ENCODE measurements at regions of chr6 and their contacts with region 1.

Region 1: GRCh38 chr6:31158140-31158862 is at the start of gene TCF19:
- DNase-seq: peak; percentile 99
- H3K4me3 Mint-ChIP-seq: peak within 1 kb of the TSS; percentile 82
- H3K27ac Mint-ChIP-seq: peak within 1 kb of the TSS; percentile 75
- H3K4me1 Mint-ChIP-seq: peaks cover 29% of the 10 kb centered on the region
- H3K27me3 Mint-ChIP-seq: no peaks in the 10 kb centered on the region
- total RNA-seq, gene TCF19: 75.9 and 78.4 TPM in 2 replicates

Region 2: DNA sequence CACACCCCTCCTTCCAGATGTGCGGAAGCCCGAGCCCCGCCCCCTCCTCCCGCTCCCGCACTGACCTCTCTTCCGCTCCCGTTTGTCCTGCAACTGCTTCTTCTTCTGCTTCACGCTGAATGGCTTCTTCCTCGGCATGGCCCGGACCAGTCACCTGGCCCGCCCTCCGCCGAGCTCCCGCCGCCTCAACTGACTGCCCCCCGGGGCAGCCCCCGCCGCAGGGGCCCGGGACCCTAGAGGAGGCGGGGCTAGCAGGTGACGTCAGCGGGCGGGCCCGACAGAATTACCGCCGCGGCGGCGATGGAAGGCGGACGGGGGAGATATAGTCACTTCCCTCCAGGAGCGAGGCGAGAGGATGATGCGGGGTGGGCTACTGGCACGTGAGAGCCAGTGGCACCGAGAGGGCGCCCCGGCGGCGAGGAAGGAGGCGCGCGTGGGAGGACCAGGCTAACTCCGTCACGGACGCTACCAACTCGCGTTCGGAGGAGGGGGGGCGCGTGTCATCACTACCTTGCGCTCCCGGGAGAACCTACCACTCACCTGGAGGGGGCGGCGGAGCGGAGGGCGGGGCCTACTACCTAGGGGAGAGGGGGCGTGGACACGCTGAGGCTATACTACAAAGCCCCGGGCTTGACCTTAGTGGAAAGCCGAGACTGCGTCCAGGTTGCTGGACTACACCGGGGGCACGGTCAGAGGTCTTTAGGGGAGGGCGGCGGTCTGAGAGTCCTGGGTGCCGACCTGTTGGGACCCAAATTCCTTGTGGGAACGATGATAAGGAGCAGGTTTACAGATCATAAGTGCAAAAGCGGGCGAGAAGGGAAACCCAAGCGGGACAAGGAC is 602.0 kb before region 1 on chr6 and contains the start of gene GNL1:
- intact Hi-C with region 1: loop called (anchors 1 kb)
- DNase-seq: peak; percentile 96
- H3K4me3 Mint-ChIP-seq: peak within 1 kb of the TSS; percentile 96
- H3K27ac Mint-ChIP-seq: peak within 1 kb of the TSS; percentile 99
- H3K4me1 Mint-ChIP-seq: peaks cover 36% of the 10 kb centered on the region
- H3K27me3 Mint-ChIP-seq: no peaks in the 10 kb centered on the region
- total RNA-seq, gene GNL1: 86.3 and 92.4 TPM in 2 replicates

Region 3: DNA sequence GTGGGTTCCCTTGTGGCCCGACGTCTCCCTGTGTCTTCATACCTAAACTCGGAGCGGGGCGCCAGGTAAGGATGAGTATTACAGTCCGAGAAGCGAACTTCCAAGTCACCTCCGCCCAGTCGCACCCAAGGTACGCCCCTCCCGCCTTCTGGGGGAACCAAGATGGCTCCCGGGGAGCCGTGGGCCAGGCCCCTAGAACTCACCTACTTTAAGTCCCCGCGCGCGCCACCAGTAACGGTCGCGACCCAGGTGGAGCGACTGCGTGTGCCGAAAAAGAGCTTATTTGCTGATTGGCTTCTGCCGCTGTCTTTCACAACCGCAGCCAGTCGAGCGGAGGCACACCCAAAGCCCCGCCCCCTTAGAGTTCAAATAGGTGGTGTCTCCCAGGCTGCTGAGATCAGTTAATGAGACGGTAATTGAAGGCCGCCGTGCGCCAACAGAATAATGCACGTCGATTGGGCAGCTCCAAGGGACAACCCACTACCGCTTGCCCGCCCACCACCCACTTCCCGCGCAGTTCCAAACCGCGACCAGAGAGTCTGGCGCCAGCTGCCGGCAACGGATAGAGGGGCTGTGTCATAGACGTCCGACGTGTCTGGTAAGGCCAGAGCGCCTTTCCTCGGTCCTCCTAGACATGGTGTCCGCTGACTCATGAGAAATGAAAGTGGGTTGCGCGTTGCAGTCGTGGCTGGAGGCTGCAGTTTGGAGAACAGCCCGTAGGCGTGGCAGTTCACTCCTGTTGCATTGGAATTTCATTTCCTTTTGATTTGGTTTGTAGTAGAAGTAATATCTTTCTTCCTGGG is 441.1 kb before region 1 on chr6 and contains the start of gene MDC1:
- intact Hi-C with region 1: loop called (anchors 1 kb)
- DNase-seq: peak; percentile 99
- H3K4me3 Mint-ChIP-seq: peak within 1 kb of the TSS; percentile 91
- H3K27ac Mint-ChIP-seq: peak within 1 kb of the TSS; percentile 99
- H3K4me1 Mint-ChIP-seq: peaks cover 51% of the 10 kb centered on the region
- H3K27me3 Mint-ChIP-seq: no peaks in the 10 kb centered on the region
- total RNA-seq, gene MDC1: 93.7 and 95.7 TPM in 2 replicates

Region 4: DNA sequence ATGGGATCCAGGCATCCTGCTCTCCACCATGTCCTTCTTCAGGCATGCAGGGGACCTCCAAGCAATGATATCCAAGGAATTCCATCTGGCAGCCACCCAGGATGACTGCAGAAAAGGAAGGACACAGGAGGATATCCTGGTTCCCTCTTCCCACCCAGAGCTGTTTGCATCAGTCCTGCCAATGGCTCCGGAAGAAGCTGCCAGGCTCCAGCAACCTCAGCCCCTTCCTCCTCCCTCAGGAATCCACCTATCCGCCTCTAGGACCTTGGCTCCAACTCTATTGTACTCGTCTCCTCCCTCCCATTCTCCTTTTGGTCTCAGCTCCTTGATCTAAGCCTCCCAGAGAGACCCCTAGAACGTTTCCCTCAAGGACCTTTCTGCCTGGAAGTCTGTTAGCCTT is 18.7 kb before region 1 on chr6:
- intact Hi-C with region 1: loop called (anchors 1 kb)
- DNase-seq: no peak
- H3K4me3 Mint-ChIP-seq: no peak overlapping the region
- H3K27ac Mint-ChIP-seq: no peak overlapping the region
- H3K4me1 Mint-ChIP-seq: peaks cover 8% of the 10 kb centered on the region
- H3K27me3 Mint-ChIP-seq: peaks cover 3% of the 10 kb centered on the region

Region 5: DNA sequence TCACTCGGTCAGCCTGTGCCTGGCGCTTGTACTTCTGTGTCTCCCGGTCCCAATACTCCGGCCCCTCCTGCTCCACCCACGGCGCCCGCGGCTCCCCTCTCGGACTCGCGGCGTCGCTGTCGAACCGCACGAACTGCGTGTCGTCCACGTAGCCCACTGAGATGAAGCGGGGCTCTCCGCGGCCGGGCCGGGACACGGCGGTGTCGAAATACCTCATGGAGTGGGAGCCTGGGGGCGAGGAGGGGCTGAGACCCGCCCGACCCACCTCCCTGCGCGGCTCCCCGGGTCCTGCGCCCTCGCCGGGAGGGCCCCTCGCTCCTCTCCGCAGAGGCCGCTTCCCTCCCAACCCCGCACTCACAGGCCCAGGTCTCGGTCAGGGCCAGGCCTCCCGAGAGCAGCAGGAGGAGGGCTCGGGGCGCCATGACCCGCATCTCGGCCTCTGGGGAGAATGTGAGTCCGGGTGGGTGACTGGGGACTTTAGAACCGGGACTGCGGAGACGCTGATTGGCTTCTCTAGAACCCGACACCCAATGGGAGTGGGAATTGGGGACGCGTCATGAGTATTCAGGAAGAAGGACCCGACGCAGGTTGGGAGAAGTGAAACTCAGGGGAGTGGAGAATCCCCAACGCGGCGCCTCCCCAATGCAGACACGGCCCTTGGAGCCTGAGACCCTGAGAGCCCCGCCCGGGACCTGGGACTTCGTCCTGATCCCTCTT is 113.5 kb after region 1 on chr6 and contains the start of gene HLA-C:
- intact Hi-C with region 1: loop called (anchors 1 kb)
- DNase-seq: peak; percentile 88
- H3K4me3 Mint-ChIP-seq: peak within 1 kb of the TSS; percentile 97
- H3K27ac Mint-ChIP-seq: peak within 1 kb of the TSS; percentile 94
- H3K4me1 Mint-ChIP-seq: peaks cover 53% of the 10 kb centered on the region
- H3K27me3 Mint-ChIP-seq: peaks cover 4% of the 10 kb centered on the region
- total RNA-seq, gene HLA-C: 944 and 984 TPM in 2 replicates

Region 6: DNA sequence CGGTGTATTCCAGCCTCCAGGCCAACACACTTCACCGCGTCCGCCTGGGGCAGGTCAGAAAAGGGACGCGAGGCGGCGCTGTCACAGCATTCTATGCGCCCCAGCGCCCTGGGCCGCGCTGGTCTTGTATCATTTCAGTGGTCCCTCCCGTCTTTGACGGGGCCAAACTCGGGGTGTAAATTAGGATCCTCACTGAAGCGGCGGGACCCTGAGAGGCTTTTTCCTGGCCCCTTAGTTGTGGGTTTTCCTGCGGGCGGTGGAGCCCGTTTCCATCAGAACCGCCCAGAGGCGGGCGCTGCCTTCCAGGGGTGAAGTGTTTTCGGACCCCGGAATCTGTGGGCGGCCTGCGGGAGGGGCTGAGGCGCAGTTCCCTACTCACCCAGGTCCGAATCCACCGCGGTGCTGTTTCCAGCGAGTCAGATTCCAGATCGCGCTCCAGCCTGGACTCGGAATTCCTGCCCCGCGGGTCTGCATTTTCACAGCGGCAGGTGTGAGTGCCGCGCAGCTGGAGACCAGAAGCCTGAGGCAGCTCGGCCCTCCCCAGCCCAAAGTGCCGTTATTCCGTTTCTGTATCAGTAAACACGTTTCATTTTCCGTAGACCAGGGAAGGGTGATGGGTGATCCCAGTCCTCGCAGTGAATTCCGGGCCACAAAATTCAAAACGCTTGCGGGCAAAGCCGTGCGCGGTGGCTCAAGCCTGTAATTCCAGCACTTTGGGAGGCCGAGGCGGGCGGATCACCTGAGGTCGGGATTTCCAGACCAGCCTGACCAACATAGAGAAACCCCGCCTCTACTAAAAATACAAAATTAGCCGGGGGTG is 335.8 kb after region 1 on chr6:
- intact Hi-C with region 1: loop called (anchors 2 kb)
- DNase-seq: peak; percentile 69
- H3K4me3 Mint-ChIP-seq: peak overlapping the region; percentile 89
- H3K27ac Mint-ChIP-seq: peak overlapping the region; percentile 85
- H3K4me1 Mint-ChIP-seq: peaks cover 46% of the 10 kb centered on the region
- H3K27me3 Mint-ChIP-seq: no peaks in the 10 kb centered on the region

Region 7: GRCh38 chr6:32195652-32195901 is 1037.3 kb after region 1 on chr6:
- intact Hi-C with region 1: loop called (anchors 1 kb)
- DNase-seq: peak; percentile 100
- H3K4me3 Mint-ChIP-seq: peak overlapping the region; percentile 97
- H3K27ac Mint-ChIP-seq: peak overlapping the region; percentile 98
- H3K4me1 Mint-ChIP-seq: peaks cover 48% of the 10 kb centered on the region
- H3K27me3 Mint-ChIP-seq: peaks cover 2% of the 10 kb centered on the region

Measured in activated T-helper 1 cell treated with anti-CD3 and anti-CD28 coated beads, Interleukin-12 subunit alpha, Interleukin-12 subunit beta, Interleukin-2, Interleukin-4 antibody, amounts not matched to agents 30 ng/mL and 10 ng/mL and 1 ng/mL, durations not matched to agents 14 hours and 24 hours and 36 hours (primary cell).